ENCODE measurements at regions of chr6 and their contacts with region 1.

Region 1: GRCh38 chr6:37059344-37060206 is 54.1 kb downstream of the FGD2 start:
- DNase-seq: peak; percentile 97
- H3K4me3 Mint-ChIP-seq: peak overlapping the region; percentile 46
- H3K27ac Mint-ChIP-seq: peak overlapping the region; percentile 91
- H3K4me1 Mint-ChIP-seq: peaks cover 31% of the 10 kb centered on the region
- H3K27me3 Mint-ChIP-seq: no peaks in the 10 kb centered on the region
- CTCF ChIP-seq: peak; percentile 66

Region 2: GRCh38 chr6:36752886-36753506 is 306.6 kb before region 1 on chr6:
- CTCF ChIA-PET with region 1: no interaction called
- POLR2A ChIA-PET with region 1: no interaction called
- intact Hi-C with region 1: no loop called
- DNase-seq: no peak
- H3K4me3 Mint-ChIP-seq: no peak overlapping the region
- H3K27ac Mint-ChIP-seq: no peak overlapping the region
- H3K4me1 Mint-ChIP-seq: peaks cover 6% of the 10 kb centered on the region
- H3K27me3 Mint-ChIP-seq: no peaks in the 10 kb centered on the region
- CTCF ChIP-seq: no peak

Region 3: DNA sequence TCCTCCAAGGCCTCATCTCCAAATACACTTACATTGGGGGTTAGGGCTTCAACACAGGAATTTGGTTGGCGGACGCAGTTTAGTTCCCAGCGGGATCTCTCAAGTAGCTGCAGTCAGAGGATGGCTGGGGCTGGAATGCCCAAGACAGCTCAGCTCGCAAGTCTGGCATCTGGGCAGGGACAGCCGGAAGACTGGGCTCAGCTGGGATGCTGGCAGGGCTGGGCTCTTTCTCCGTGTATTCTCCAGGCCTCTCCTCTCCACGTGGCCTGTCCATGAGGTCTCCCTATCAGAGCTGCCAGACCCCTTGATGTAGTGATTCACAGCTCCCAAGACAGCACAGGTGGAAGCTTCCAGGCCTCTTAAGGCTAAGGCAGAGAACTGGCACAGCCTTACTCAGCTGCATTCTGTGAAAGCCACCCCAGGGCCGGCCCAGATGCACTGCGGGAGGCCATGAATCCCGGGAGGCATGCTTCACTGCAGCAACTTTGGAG is 49.1 kb before region 1 on chr6:
- CTCF ChIA-PET with region 1: no interaction called
- POLR2A ChIA-PET with region 1: no interaction called
- intact Hi-C with region 1: no loop called
- DNase-seq: no peak
- H3K4me3 Mint-ChIP-seq: no peak overlapping the region
- H3K27ac Mint-ChIP-seq: no peak overlapping the region
- H3K4me1 Mint-ChIP-seq: no peaks in the 10 kb centered on the region
- H3K27me3 Mint-ChIP-seq: no peaks in the 10 kb centered on the region
- CTCF ChIP-seq: no peak

Region 4: DNA sequence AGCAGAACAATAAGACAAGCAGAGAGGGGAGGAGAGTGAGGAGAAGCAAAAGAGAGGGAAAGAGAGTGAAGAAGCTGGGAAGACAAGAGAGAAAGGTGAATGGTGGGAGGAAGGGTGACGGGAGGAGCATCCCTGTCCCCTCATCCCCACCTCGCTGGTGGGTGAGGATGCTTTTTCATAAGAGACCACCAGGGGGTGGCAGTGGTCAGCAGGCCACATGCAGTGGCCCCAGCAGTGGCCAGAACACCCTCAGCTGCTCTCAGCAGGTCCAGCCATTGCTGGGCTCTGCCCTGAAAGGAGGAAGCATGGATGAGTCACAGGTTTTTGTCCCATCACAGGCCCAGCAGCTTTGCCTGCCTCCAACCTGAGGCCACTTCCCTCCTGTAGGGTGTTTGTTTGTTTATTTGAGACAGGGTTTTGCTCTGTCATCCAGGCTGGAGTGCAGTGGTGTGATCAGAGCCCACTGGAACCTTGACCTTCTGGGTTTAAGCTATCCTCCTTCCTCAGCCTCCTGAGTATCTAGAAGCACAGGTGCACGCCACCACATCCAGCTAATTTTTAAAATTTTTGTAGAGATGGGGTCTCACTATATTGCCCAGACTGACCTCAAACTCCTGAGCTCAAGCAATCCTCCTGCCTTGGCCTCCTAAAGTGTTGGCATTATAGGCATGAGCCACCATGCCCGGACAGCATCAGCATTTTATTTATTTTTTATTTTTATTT is 30.2 kb before region 1 on chr6:
- CTCF ChIA-PET with region 1: interaction called, 314 read pairs
- POLR2A ChIA-PET with region 1: interaction called, 50 read pairs
- intact Hi-C with region 1: no loop called
- DNase-seq: peak; percentile 78
- H3K4me3 Mint-ChIP-seq: no peak overlapping the region
- H3K27ac Mint-ChIP-seq: peak overlapping the region; percentile 9
- H3K4me1 Mint-ChIP-seq: peaks cover 20% of the 10 kb centered on the region
- H3K27me3 Mint-ChIP-seq: no peaks in the 10 kb centered on the region
- CTCF ChIP-seq: peak; percentile 58

Region 5: GRCh38 chr6:37102279-37103168 is 42.9 kb after region 1 on chr6:
- CTCF ChIA-PET with region 1: no interaction called
- POLR2A ChIA-PET with region 1: interaction called, 32 read pairs
- intact Hi-C with region 1: loop called (anchors 2 kb)
- DNase-seq: peak; percentile 72
- H3K4me3 Mint-ChIP-seq: peak overlapping the region; percentile 67
- H3K27ac Mint-ChIP-seq: peak overlapping the region; percentile 93
- H3K4me1 Mint-ChIP-seq: peaks cover 13% of the 10 kb centered on the region
- H3K27me3 Mint-ChIP-seq: no peaks in the 10 kb centered on the region
- CTCF ChIP-seq: no peak

Region 6: GRCh38 chr6:37131104-37131959 is 71.8 kb after region 1 on chr6:
- CTCF ChIA-PET with region 1: interaction called, 6 read pairs
- POLR2A ChIA-PET with region 1: interaction called, 15 read pairs
- intact Hi-C with region 1: no loop called
- DNase-seq: peak; percentile 68
- H3K4me3 Mint-ChIP-seq: no peak overlapping the region
- H3K27ac Mint-ChIP-seq: peak overlapping the region; percentile 33
- H3K4me1 Mint-ChIP-seq: peaks cover 49% of the 10 kb centered on the region
- H3K27me3 Mint-ChIP-seq: no peaks in the 10 kb centered on the region
- CTCF ChIP-seq: no peak

Region 7: GRCh38 chr6:37137201-37138090 is 77.9 kb after region 1 on chr6:
- CTCF ChIA-PET with region 1: interaction called, 5 read pairs
- POLR2A ChIA-PET with region 1: interaction called, 10 read pairs
- intact Hi-C with region 1: loop called (anchors 1 kb)
- DNase-seq: peak; percentile 90
- H3K4me3 Mint-ChIP-seq: no peak overlapping the region
- H3K27ac Mint-ChIP-seq: peak overlapping the region; percentile 62
- H3K4me1 Mint-ChIP-seq: peaks cover 34% of the 10 kb centered on the region
- H3K27me3 Mint-ChIP-seq: no peaks in the 10 kb centered on the region
- CTCF ChIP-seq: no peak

Measured in MCF 10A (cell line).